Heart right ventricle (tissue), 16 donors: ENCODE measurements at regions of chr4 and their contacts with region 1.

Region 1: DNA sequence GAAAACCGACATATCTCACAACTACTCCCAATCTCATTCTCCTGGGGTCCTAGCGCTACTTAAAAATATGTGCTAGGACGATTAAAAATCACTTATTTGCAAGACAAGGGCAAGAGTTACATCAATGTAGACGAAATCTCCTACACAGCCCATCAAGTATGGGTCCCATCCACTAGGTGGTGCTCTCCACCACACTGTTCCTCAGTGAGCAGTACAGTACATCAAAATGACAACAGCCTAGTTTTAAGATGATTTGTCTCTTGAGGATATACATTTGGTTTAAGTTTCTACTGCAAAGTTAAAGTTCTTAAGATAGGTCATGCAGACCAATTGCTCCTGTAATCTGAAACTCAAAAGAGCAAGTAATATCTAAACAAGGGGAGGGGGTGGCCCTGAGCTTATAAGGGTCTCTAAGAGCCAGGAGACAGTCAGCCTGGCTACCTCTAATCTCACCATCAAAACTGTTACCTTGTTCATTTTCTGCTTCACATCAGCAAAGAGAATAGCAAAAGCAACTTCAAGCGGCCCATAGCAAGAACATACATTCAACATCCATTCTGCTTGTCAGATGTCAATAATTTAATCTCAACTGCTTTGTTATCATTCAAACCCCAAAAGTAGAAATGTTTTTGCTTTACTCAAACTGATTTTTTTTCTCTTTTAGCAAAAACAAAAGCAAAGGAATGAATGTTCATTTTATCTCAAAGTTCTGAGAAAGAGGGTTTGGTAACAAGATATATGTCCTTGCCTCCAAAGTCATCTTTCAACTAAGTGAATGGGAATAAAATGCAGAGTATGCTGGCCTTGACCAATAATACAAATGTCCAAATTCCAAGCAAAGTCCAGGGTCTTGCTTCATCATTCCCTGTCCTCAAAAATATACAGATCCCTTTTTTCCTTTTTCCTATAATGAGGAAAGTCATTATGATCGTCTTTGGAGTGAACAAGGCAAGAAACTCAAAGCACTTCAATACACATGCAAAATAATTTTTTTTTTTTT is 53.1 kb downstream of the STX18 start:
- DNase-seq: peak; percentile 20 to 63
- ATAC-seq: peak; percentile 75 to 90 (median 86)
- H3K4me3 ChIP-seq: no peak overlapping the region
- H3K27ac ChIP-seq: no peak overlapping the region
- H3K4me1 ChIP-seq: peaks cover 0 to 17% (median 7%) of the 10 kb centered on the region in 9 donors
- H3K27me3 ChIP-seq: no peaks in the 10 kb centered on the region
- CTCF ChIP-seq: peak; percentile 75 to 93 (median 91)

Region 2: DNA sequence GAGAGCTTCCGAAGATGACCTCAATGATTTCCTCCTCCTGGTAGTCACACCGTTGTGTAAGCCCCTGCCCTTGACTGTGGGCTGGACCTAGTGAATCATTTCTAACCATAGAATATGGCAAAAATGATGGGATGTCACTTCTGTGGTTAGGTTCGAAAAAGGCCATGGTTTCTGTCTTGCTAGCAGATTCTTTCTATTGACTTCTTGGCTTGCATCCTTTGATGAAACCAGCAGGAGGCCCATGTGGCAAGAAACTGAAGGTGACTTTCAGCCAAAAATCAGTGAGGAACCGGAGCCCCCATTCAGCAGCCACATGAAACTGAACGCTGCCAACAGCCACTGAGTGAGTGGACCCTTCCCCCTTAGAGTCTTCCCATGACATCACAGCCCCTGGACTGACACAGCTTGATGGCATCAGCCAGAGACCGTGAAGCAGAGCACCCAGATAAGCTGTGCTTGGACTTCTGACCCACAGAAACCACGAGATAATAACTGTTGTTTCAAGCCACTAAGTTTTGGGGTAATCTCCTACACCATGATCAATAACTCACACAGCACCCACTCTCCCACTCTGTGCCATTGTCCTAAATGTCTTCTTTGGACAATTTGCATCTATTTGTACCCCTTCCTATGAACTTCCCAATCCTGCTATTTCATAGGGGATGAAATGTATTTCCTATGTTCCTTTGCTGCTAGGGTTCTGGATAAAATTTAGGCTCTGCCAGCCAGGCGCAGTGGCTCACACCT is 201.2 kb after region 1 on chr4:
- intact Hi-C with region 1: loop called in 1 of 10 experiments (anchors 10 kb)
- DNase-seq: no peak
- ATAC-seq: no peak
- H3K4me3 ChIP-seq: no peak overlapping the region
- H3K27ac ChIP-seq: no peak overlapping the region
- H3K4me1 ChIP-seq: peaks cover 0 to 5% (median 0%) of the 10 kb centered on the region in 9 donors
- H3K27me3 ChIP-seq: no peaks in the 10 kb centered on the region
- CTCF ChIP-seq: no peak

Region 3: GRCh38 chr4:4867375-4868039 is 378.8 kb after region 1 on chr4:
- intact Hi-C with region 1: loop called in 4 of 10 experiments (anchors 10 kb)
- DNase-seq: peak; percentile 41 to 46
- ATAC-seq: peak; percentile 34 to 76 (median 64)
- H3K4me3 ChIP-seq: peak overlapping the region in 9 of 10 donors; percentile 19 to 49 (median 37)
- H3K27ac ChIP-seq: peak overlapping the region in 1 of 10 donors; percentile 19
- H3K4me1 ChIP-seq: peaks cover 2 to 66% (median 25%) of the 10 kb centered on the region in 9 donors
- H3K27me3 ChIP-seq: peaks cover 79 to 100% (median 100%) of the 10 kb centered on the region in 7 donors
- CTCF ChIP-seq: peak in 7 of 9 donors; percentile 5 to 46 (median 29)

Region 4: DNA sequence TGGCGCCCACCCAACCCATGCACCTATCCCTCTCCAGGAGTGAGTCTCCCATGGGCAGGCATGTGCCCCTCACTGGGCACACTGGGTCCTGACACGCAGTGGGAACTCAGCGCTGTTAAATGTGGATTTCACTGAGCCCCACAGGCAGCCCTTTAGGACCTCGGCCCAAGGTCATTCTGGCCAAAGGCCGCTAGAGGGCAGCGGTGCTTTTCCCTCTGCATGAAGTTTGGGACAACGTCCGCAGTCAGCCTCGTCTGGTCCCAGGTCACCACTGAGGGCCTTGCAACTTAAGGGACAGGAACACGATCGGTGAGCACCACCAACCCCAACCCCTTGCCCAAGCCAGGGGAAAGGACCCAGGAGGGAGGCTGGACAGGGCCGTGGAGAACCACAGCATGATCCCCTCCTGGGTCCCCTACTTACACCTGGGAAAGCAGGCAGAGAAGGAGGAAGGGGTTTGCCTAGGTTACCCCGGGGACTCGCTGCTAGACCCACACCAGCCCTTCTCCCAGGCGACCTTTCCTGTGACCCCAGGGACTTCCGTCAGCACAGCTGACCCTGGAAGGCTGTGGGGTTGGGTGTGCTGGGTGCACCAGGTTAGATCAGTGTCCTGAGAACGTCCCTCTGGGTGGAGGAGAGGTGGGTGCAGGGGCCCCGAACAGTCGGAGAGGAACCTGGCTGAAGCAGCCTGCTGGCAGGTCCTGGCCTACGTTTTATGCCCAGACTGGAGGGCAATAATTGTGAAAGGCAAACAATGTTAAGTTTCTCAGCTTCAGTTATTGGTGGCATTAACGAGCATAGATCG is 506.6 kb after region 1 on chr4:
- intact Hi-C with region 1: loop called in 2 of 10 experiments (anchors 5 to 10 kb)
- DNase-seq: peak; percentile 66 to 71
- ATAC-seq: peak; percentile 63 to 89 (median 75)
- H3K4me3 ChIP-seq: no peak overlapping the region
- H3K27ac ChIP-seq: no peak overlapping the region
- H3K4me1 ChIP-seq: peaks cover 0 to 18% (median 10%) of the 10 kb centered on the region in 9 donors
- H3K27me3 ChIP-seq: peaks cover 0 to 13% (median 7%) of the 10 kb centered on the region in 7 donors
- CTCF ChIP-seq: peak; percentile 83 to 94 (median 89)

Region 5: DNA sequence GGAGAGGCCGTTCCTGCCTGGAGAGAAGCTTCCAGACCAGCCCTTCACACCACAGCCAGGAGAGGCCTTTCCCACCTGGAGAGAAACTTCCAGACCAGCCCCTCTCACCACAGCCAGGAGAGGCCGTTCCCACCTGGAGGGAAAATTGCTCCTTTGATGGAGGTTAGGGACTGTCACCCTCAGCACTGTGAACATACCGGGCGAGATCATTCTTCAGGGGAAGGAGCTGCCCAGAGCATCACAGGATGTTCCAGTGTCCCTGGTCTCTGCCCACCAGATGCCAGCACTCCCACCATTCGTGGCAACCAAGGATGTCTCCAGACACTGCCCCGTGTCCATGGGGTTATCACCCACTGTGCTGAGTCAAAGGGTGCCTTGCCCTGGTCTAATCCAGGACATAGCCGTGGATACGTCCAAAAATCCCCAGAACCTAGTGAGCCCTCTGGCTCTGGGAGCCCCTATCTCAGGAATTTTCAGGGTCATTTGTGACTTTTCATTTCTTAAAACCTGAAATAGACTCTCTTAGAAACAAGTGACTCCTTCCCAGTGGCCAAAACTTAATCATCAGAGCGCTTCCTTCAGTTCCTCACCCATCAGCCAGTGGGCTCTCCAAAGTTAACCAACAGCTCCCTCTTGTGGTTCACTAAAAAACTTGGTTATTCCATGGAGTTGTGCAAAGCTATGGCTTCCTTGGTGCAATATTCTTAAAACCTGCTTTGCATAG is 1324.0 kb after region 1 on chr4:
- intact Hi-C with region 1: loop called in 1 of 10 experiments (anchors 10 kb)
- DNase-seq: peak in 1 of 2 donors; percentile 52
- ATAC-seq: peak in 7 of 8 donors; percentile 68 to 80 (median 72)
- H3K4me3 ChIP-seq: no peak overlapping the region
- H3K27ac ChIP-seq: no peak overlapping the region
- H3K4me1 ChIP-seq: no peaks in the 10 kb centered on the region
- H3K27me3 ChIP-seq: no peaks in the 10 kb centered on the region
- CTCF ChIP-seq: peak; percentile 50 to 81 (median 71)